ENCODE measurements at regions of chr15 and their contacts with region 1.

Region 1: DNA sequence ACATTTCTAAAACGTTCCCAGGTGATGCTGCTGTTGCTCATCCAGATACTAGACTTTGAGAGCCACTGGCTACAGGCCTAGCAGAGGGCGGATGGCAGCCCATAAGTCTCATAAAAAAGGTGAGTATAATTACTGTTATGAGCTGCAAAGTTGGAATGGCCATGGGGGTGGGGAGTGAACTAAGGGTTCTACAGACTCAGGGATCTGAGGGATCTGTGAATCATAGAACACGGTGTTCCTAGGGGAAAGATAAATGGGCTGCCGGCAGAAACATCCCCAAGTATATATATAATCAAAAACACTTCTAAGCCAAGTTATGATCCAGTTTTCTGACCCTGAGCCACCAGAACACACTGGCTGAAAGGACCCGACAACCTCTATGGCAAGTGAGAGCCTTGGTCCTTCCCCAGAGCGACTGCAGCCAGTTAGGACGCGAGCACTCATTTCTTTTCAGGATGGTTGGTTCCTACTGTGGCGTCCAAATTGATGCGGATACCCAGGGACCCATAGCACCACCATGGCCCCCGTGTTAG is 7.9 kb upstream of the SYNM start:
- DNase-seq: no peak
- CTCF ChIP-seq: no peak

Region 2: GRCh38 chr15:99213187-99213811 is 116.3 kb after region 1 on chr15:
- in situ Hi-C with region 1: loop called (anchors 5 kb)
- DNase-seq: peak; percentile 70
- CTCF ChIP-seq: peak; percentile 76

Measured in GM13976 (cell line).